CD4-positive, alpha-beta T cell (primary cell): ENCODE measurements at regions of chr5 and their contacts with region 1.

Region 1: GRCh38 chr5:140718241-140718580 is 18.0 kb downstream of the ZMAT2 start:
- DNase-seq: no peak
- ATAC-seq: no peak
- H3K4me3 ChIP-seq: no peak overlapping the region
- H3K4me3 Mint-ChIP-seq: no peak overlapping the region
- H3K27ac ChIP-seq: no peak overlapping the region
- H3K27ac Mint-ChIP-seq: no peak overlapping the region
- H3K4me1 ChIP-seq: no peaks in the 10 kb centered on the region
- H3K4me1 Mint-ChIP-seq: peaks cover 1% of the 10 kb centered on the region
- H3K27me3 ChIP-seq: peaks cover 0 to 6% of the 10 kb centered on the region in 2 experiments
- H3K27me3 Mint-ChIP-seq: peaks cover 13% of the 10 kb centered on the region
- CTCF ChIP-seq: no peak

Region 2: DNA sequence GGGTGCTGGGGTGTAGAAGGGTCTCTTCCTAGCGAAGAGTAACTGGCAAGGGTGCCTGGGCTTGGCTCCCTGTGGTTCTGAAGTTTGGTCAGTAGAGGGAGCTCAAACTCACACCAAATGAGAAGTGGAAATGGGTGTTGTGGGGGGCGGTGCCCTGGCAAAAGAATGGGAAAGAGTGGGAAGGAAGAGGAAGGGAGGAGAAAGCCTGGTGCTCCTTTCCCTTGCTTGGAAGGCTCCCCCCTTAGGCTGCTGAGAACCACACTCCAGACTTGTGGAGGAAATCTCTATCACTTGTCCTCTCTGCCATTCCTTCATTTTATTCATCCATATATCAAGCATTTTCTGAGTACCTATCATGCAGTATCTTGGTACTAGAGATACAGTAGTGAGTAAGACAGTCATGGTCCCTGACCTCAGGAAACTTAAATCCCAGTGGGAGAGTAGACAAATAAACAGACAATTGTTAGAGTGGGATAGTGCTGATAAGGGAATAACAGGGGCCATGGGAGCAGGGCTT is 345.2 kb before region 1 on chr5:
- CTCF ChIA-PET with region 1: interaction called, 13 read pairs
- POLR2A ChIA-PET with region 1: no interaction called
- intact Hi-C with region 1: loop called (anchors 1 to 2 kb)
- DNase-seq: peak in 11 of 14 experiments; percentile 10 to 65 (median 22)
- ATAC-seq: peak; percentile 66
- H3K4me3 ChIP-seq: no peak overlapping the region
- H3K4me3 Mint-ChIP-seq: no peak overlapping the region
- H3K27ac ChIP-seq: no peak overlapping the region
- H3K27ac Mint-ChIP-seq: no peak overlapping the region
- H3K4me1 ChIP-seq: peaks cover 5% of the 10 kb centered on the region
- H3K4me1 Mint-ChIP-seq: no peaks in the 10 kb centered on the region
- H3K27me3 ChIP-seq: no peaks in the 10 kb centered on the region
- H3K27me3 Mint-ChIP-seq: no peaks in the 10 kb centered on the region
- CTCF ChIP-seq: peak; percentile 83

Region 3: GRCh38 chr5:140664359-140665119 is 53.7 kb before region 1 on chr5 and contains the start of gene WDR55:
- CTCF ChIA-PET with region 1: no interaction called
- POLR2A ChIA-PET with region 1: no interaction called
- intact Hi-C with region 1: loop called in 1 of 2 experiments (anchors 1 kb)
- DNase-seq: peak; percentile 90 to 98 (median 95)
- ATAC-seq: peak; percentile 92
- H3K4me3 ChIP-seq: peak within 1 kb of the TSS; percentile 98
- H3K4me3 Mint-ChIP-seq: peak within 1 kb of the TSS; percentile 91
- H3K27ac ChIP-seq: peak within 1 kb of the TSS; percentile 87 to 93
- H3K27ac Mint-ChIP-seq: peak within 1 kb of the TSS; percentile 98
- H3K4me1 ChIP-seq: peaks cover 26% of the 10 kb centered on the region
- H3K4me1 Mint-ChIP-seq: peaks cover 45% of the 10 kb centered on the region
- H3K27me3 ChIP-seq: no peaks in the 10 kb centered on the region
- H3K27me3 Mint-ChIP-seq: no peaks in the 10 kb centered on the region
- CTCF ChIP-seq: no peak
- total RNA-seq, gene WDR55: 40.1 to 42.9 TPM

Region 4: DNA sequence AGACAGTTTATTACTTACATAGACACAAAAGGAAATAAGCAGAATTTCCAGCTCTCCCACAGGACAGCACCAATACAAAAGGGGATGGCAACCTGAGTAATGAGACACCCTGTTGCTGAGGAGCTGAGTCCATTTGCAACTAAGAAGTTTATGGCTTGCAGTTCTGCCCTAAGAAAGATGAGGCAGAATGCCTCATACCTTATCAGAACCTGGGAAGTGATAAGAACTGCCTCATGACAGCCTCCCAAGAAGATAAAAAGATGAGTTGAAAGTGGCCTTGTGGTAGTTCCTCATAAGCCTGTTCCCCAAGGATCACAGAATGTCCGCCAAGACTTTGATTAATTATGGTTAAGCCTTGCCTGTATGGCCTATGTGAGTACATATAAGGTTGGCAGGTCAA is 23.8 kb after region 1 on chr5:
- CTCF ChIA-PET with region 1: no interaction called
- POLR2A ChIA-PET with region 1: no interaction called
- intact Hi-C with region 1: no loop called
- DNase-seq: no peak
- ATAC-seq: no peak
- H3K4me3 ChIP-seq: no peak overlapping the region
- H3K4me3 Mint-ChIP-seq: no peak overlapping the region
- H3K27ac ChIP-seq: no peak overlapping the region
- H3K27ac Mint-ChIP-seq: no peak overlapping the region
- H3K4me1 ChIP-seq: no peaks in the 10 kb centered on the region
- H3K4me1 Mint-ChIP-seq: no peaks in the 10 kb centered on the region
- H3K27me3 ChIP-seq: peaks cover 4 to 6% of the 10 kb centered on the region in 2 experiments
- H3K27me3 Mint-ChIP-seq: peaks cover 22% of the 10 kb centered on the region
- CTCF ChIP-seq: no peak